Vagina (tissue), 2 donors: ENCODE measurements at regions of chr4 and their contacts with region 1.

Region 1: GRCh38 chr4:138706206-138706605 is 309.4 kb upstream of the NOCT start:
- DNase-seq: no peak
- H3K4me3 ChIP-seq: no peak overlapping the region
- H3K27ac ChIP-seq: no peak overlapping the region
- H3K4me1 ChIP-seq: no peaks in the 10 kb centered on the region
- H3K27me3 ChIP-seq: no peaks in the 10 kb centered on the region
- CTCF ChIP-seq: no peak
- POLR2A ChIP-seq: no peak

Region 2: GRCh38 chr4:138567696-138568095 is 138.5 kb before region 1 on chr4:
- intact Hi-C with region 1: no loop called
- DNase-seq: no peak
- H3K4me3 ChIP-seq: no peak overlapping the region
- H3K27ac ChIP-seq: no peak overlapping the region
- H3K4me1 ChIP-seq: no peaks in the 10 kb centered on the region
- H3K27me3 ChIP-seq: no peaks in the 10 kb centered on the region
- CTCF ChIP-seq: no peak
- POLR2A ChIP-seq: no peak

Region 3: GRCh38 chr4:138680989-138681604 is 25.1 kb before region 1 on chr4:
- intact Hi-C with region 1: loop called (anchors 1 kb)
- DNase-seq: peak in 1 of 2 donors; percentile 74
- H3K4me3 ChIP-seq: no peak overlapping the region
- H3K27ac ChIP-seq: no peak overlapping the region
- H3K4me1 ChIP-seq: no peaks in the 10 kb centered on the region
- H3K27me3 ChIP-seq: no peaks in the 10 kb centered on the region
- CTCF ChIP-seq: peak; percentile 80 to 90 (median 88)
- POLR2A ChIP-seq: no peak

Region 4: GRCh38 chr4:138996090-138996489 is 289.9 kb after region 1 on chr4:
- intact Hi-C with region 1: no loop called
- DNase-seq: no peak
- H3K4me3 ChIP-seq: no peak overlapping the region
- H3K27ac ChIP-seq: no peak overlapping the region
- H3K4me1 ChIP-seq: no peaks in the 10 kb centered on the region
- H3K27me3 ChIP-seq: no peaks in the 10 kb centered on the region
- CTCF ChIP-seq: no peak
- POLR2A ChIP-seq: no peak